ENCODE measurements at regions of chr18 and their contacts with region 1.

Region 1: DNA sequence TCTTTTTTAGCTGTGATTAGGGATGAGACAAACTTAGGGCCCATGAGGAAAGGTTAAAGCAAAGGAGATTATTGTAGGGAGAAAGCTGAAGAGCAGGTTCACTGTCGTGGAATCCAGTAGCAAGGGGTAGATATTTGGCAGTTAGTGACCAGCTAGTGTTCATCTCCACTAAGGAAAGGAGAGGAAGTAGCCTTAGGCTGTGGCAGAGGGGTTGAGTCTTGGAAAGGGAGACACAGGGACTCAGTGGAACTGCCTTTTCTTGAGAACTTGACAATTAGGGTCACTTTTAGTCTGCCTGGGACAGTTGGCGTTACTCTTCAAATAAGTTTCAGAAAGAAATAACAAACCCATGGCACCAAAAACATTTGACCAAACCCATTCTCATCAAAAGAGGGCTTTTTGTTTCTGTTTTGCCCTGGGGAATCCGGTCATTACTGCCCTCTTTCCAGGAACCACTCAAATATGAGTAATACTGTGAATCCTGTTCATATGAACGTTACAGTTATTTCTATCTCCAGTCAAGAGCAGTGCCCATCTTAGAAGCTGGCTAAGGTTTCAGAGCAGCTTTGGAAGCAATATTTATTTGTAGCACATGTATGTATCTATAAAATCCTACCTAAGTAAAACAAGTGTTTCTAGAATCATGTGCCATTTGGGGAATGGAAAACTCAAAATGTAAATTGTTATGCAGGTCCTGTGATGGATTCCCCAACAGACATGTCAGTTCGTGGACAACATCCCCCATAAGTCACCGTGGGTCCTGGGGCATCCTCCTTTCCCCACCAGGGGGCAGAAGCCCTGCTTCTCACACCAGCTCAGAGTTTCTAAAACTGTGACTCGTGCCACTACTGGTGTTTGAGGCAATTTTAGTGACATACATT is 77.3 kb upstream of the PHLPP1 start:
- DNase-seq: peak; percentile 36
- H3K4me3 Mint-ChIP-seq: no peak overlapping the region
- H3K27ac Mint-ChIP-seq: no peak overlapping the region
- H3K4me1 Mint-ChIP-seq: peaks cover 17% of the 10 kb centered on the region
- H3K27me3 Mint-ChIP-seq: peaks cover 6% of the 10 kb centered on the region

Region 2: GRCh38 chr18:61173554-61173953 is 1464.5 kb before region 1 on chr18:
- intact Hi-C with region 1: no loop called
- DNase-seq: no peak
- H3K4me3 Mint-ChIP-seq: no peak overlapping the region
- H3K27ac Mint-ChIP-seq: no peak overlapping the region
- H3K4me1 Mint-ChIP-seq: no peaks in the 10 kb centered on the region
- H3K27me3 Mint-ChIP-seq: no peaks in the 10 kb centered on the region

Region 3: DNA sequence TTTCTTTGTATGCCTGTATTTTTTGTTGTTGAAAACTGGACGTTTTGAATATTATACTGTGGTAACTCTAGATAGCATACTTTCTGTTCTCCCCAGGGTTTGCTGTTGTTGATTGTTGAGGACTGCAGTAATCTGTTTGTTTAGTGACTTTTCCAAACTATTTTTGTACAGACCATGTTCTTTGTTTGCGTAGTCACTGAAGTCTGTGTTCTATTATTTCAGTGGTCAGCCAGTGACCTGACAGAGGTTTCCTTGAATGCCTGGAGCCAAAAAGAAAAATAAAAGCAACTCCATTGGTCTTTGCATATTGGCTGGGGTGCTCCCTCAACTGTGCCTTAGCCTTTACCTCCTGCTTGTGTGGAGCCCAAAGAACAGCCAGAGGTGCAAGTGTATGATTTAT is 34.6 kb after region 1 on chr18:
- intact Hi-C with region 1: no loop called
- DNase-seq: no peak
- H3K4me3 Mint-ChIP-seq: no peak overlapping the region
- H3K27ac Mint-ChIP-seq: no peak overlapping the region
- H3K4me1 Mint-ChIP-seq: peaks cover 10% of the 10 kb centered on the region
- H3K27me3 Mint-ChIP-seq: peaks cover 8% of the 10 kb centered on the region

Region 4: GRCh38 chr18:62957885-62958472 is 319.9 kb after region 1 on chr18:
- intact Hi-C with region 1: loop called (anchors 1 kb)
- DNase-seq: peak; percentile 43
- H3K4me3 Mint-ChIP-seq: no peak overlapping the region
- H3K27ac Mint-ChIP-seq: no peak overlapping the region
- H3K4me1 Mint-ChIP-seq: peaks cover 16% of the 10 kb centered on the region
- H3K27me3 Mint-ChIP-seq: no peaks in the 10 kb centered on the region

Region 5: DNA sequence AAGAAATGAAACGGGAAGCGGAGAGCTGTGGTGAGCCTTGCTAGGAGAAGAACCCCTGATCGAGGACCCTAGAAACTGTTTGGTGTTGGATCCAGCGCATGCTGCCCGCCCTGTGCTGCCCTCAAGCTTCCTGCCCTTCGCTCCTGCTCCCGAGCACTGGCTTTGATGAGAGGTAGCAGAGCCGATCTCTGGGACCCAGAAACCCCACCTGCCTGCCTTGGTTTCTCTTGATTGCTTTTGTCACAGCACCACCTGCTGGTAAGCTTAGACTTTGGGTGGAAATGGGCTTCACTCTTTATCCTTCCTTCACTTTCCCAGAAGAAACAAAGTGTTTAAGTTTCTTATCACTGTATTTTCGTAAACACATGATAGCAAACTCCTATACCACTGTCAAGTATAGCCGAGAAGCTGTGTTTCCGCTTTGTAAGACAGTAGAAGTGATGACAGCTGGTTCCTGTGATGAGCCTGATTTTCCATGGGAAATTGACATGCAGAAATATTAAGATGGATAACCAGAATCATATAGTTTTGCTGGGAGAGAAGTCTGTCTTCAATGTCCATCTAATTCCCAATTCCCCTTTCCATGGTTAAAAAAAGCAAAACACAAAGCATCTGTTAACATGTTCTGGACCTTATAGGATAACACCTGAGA is 344.7 kb after region 1 on chr18:
- intact Hi-C with region 1: loop called (anchors 1 kb)
- DNase-seq: peak; percentile 28
- H3K4me3 Mint-ChIP-seq: no peak overlapping the region
- H3K27ac Mint-ChIP-seq: no peak overlapping the region
- H3K4me1 Mint-ChIP-seq: no peaks in the 10 kb centered on the region
- H3K27me3 Mint-ChIP-seq: no peaks in the 10 kb centered on the region

Measured in activated T-helper 1 cell treated with anti-CD3 and anti-CD28 coated beads, Interleukin-12 subunit alpha, Interleukin-12 subunit beta, Interleukin-2, Interleukin-4 antibody, amounts not matched to agents 30 ng/mL and 10 ng/mL and 1 ng/mL, durations not matched to agents 14 hours and 24 hours and 36 hours (primary cell).